CD14-positive monocyte (primary cell): ENCODE measurements at regions of chr4 and their contacts with region 1.

Region 1: DNA sequence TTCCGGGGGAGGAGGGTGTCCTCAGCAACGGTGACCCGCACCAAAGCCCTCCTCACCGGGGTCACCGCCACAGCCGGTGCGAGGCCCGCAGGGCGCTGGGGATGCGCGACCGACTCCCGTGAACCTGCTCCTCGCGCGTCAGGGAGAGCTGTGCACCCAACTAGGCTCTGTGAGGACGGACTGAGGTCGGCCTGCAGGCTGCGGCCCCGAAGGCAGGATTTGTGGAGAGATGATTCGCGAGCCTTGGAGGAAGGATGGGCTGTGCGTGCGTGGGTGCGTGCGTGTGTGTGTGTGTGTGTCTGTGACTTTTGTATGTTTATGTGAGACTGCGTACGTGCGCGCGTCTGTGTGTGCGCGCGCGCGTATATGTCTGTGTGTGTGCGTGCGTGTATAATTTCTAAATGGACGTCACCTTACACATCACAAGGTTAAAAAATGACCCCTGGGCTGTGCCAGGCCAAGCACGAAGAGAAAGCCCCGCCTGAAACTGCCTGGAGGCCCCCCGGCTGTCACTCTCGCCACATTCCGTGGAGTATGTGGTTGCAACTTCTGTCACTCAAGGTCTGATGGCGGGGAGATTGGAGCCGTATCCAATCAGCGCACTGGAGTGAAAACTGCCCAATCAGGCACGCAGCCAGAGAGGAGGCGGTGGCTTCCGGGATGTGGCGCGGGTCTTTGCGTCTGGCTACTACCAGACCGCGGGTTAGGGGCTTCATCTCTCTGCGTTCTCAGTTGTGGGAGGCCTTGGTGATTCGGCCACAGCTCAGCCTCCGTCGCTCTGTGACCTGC is at the start of gene ZNF141:
- DNase-seq: peak; percentile 90 to 95 (median 93)
- H3K4me3 ChIP-seq: peak within 1 kb of the TSS; percentile 63 to 93 (median 76)
- H3K4me3 Mint-ChIP-seq: peak within 1 kb of the TSS; percentile 99
- H3K27ac ChIP-seq: peak within 1 kb of the TSS; percentile 85 to 95
- H3K27ac Mint-ChIP-seq: peak within 1 kb of the TSS; percentile 96 to 99 (median 97)
- H3K4me1 ChIP-seq: peaks cover 14 to 26% of the 10 kb centered on the region in 2 donors
- H3K4me1 Mint-ChIP-seq: peaks cover 20% of the 10 kb centered on the region
- H3K27me3 ChIP-seq: peaks cover 0 to 3% of the 10 kb centered on the region in 2 donors
- H3K27me3 Mint-ChIP-seq: peaks cover 2 to 4% (median 2%) of the 10 kb centered on the region in 3 donors
- CTCF ChIP-seq: no peak
- polyA plus RNA-seq, gene ZNF141: 2.5 to 4.2 (median 2.7) TPM

Region 2: DNA sequence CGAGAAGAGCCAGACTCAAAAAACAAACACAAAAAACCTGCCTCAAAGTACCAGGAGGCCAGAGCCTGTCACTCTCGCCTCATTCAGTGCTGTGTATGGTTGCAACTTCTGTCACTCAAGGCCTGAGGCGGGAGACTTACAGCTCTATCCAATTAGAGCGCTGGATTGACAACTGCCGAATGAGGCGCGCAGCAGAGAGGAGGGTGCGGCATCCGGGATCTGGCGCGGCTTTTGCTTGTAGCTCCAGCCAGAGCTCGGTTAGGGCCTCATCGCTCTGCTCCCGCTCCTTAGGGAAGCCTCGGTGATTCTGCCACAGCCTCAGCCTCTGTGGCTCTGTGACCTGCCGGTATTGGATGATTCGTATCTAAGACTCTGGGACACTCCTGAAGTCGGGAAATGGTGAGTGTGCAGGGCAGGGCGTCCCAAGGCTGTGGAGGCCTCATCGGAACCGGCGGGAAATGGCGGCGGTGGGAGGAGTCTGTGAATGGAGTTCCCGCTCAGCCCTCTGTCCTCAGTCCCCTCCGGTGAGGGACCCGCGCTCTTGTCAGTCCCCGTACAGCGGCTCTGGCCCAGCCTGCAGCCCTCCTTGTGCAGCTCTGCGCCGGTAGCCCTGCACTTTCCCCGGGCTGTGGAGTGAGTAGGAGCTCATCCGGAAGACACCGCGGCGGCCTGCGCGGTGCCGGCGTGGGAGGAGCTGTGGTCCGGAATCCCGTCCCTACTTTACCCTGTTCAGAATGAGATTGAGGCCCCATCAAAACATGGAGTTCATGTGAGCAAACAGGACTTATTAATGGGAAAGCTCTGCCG is 212.9 kb before region 1 on chr4 and contains the start of gene ZNF718:
- intact Hi-C with region 1: loop called in 1 of 2 experiments (anchors 5 kb)
- DNase-seq: peak; percentile 87 to 90 (median 89)
- H3K4me3 ChIP-seq: peak within 1 kb of the TSS; percentile 51 to 98 (median 94)
- H3K4me3 Mint-ChIP-seq: peak within 1 kb of the TSS; percentile 98 to 100
- H3K27ac ChIP-seq: peak within 1 kb of the TSS; percentile 72 to 90
- H3K27ac Mint-ChIP-seq: peak within 1 kb of the TSS; percentile 88 to 98 (median 95)
- H3K4me1 ChIP-seq: peaks cover 27 to 44% of the 10 kb centered on the region in 2 donors
- H3K4me1 Mint-ChIP-seq: peaks cover 38% of the 10 kb centered on the region
- H3K27me3 ChIP-seq: no peaks in the 10 kb centered on the region
- H3K27me3 Mint-ChIP-seq: peaks cover 0 to 5% (median 1%) of the 10 kb centered on the region in 3 donors
- CTCF ChIP-seq: no peak
- polyA plus RNA-seq, gene ZNF718: 1.9 to 2.8 (median 2.7) TPM

Region 3: GRCh38 chr4:532588-533317 is 195.4 kb after region 1 on chr4:
- intact Hi-C with region 1: no loop called
- DNase-seq: no peak
- H3K4me3 ChIP-seq: no peak overlapping the region
- H3K4me3 Mint-ChIP-seq: no peak overlapping the region
- H3K27ac ChIP-seq: no peak overlapping the region
- H3K27ac Mint-ChIP-seq: peak overlapping the region in 1 of 7 donors; percentile 1
- H3K4me1 ChIP-seq: no peaks in the 10 kb centered on the region
- H3K4me1 Mint-ChIP-seq: no peaks in the 10 kb centered on the region
- H3K27me3 ChIP-seq: no peaks in the 10 kb centered on the region
- H3K27me3 Mint-ChIP-seq: peaks cover 0 to 1% (median 0%) of the 10 kb centered on the region in 3 donors
- CTCF ChIP-seq: no peak